ENCODE measurements at regions of chr4 and their contacts with region 1.

Region 1: DNA sequence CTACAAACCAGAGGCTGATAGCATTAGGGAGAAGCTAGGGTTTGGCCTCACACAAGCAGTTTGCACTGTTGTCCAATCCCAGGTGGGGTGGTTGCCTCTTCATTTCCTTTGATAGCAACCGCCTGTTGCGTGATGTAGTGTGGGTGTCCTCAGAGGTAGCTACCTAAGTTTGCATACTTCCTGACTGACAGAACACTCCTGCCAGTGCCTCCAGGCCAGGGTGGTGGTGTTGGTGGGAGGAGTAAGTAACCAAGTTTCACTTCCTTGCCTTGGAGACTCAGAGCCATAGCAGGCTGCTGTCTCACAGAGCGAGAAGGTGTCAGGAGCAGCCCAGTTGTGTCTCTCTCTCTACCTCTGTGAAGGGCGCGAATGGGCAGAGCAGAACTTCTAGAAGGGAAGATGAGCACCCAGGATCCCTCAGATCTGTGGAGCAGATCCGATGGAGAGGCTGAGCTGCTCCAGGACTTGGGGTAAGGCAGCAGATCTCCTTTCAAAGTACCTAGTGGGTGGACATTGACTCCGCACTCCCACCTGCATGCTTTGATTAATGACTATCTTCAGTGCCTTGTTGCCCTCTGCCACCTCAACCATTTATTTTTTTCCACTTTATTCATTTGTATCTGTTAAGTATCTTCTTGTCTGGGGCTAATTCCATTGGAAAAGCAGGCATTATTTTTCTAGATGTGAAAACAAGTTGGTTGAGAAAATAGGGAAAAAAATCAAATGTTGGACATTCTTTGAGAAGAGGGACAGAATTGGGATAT is at the start of gene DAPP1:
- DNase-seq: peak; percentile 39 to 88 (median 73)
- ATAC-seq: peak; percentile 96 to 97
- H3K4me3 Mint-ChIP-seq: peak within 1 kb of the TSS; percentile 85 to 95 (median 91)
- H3K27ac Mint-ChIP-seq: peak within 1 kb of the TSS; percentile 81 to 98 (median 96)
- H3K4me1 Mint-ChIP-seq: peaks cover 29 to 65% (median 62%) of the 10 kb centered on the region in 4 donors
- H3K27me3 Mint-ChIP-seq: no peaks in the 10 kb centered on the region
- polyA plus RNA-seq, gene DAPP1: 8.6 to 17.0 (median 12.2) TPM

Region 2: DNA sequence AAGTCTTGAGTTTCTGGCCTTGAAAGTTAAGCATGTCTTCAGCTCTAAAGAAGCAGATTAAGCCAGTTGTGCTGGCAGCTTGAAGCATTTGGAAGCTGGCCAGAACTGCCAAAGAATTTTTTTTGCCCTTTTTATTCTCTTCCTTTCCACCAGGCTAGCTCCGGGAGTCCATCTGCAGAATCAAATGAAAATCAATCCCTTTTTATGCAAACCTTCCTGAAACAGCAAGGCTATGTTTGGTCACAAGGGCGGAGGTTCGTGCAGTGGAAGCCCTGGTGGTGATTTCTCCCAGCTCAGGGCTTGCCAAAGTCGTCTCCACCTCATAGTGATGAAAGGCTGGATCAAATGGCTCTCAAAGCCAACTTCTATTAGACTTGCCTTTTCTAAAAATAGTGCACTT is 137.5 kb before region 1 on chr4:
- POLR2A ChIA-PET with region 1: no interaction called
- DNase-seq: no peak
- ATAC-seq: no peak
- H3K4me3 Mint-ChIP-seq: no peak overlapping the region
- H3K27ac Mint-ChIP-seq: no peak overlapping the region
- H3K4me1 Mint-ChIP-seq: no peaks in the 10 kb centered on the region
- H3K27me3 Mint-ChIP-seq: peaks cover 4 to 32% (median 14%) of the 10 kb centered on the region in 5 donors

Region 3: DNA sequence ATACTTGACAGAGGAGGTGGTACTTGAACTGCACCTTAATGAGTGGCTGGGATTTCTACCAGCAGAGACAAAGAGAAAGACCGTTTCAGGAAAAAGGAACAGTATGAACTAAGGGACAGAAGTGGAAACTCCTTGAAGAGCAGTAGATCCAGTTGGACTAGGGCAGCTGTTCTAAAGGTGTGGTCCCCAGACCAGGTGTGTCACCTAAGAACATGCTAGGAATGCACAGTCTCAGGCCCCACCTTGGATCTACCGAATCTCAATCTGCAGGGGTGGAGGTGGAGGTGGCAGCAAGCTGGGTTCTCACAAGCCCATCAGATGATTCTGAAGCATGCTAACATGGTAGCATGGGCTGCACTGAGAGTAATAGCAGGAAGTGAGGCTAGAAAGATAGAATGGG is 22.2 kb after region 1 on chr4:
- POLR2A ChIA-PET with region 1: no interaction called
- DNase-seq: no peak
- ATAC-seq: no peak
- H3K4me3 Mint-ChIP-seq: no peak overlapping the region
- H3K27ac Mint-ChIP-seq: peak overlapping the region in 2 of 10 donors; percentile 4 to 46
- H3K4me1 Mint-ChIP-seq: peaks cover 0 to 9% (median 5%) of the 10 kb centered on the region in 4 donors
- H3K27me3 Mint-ChIP-seq: no peaks in the 10 kb centered on the region

Region 4: GRCh38 chr4:99894161-99894997 is 77.7 kb after region 1 on chr4 and contains the start of gene LAMTOR3:
- POLR2A ChIA-PET with region 1: interaction called, 14 read pairs
- DNase-seq: peak; percentile 81 to 93 (median 88)
- ATAC-seq: peak; percentile 99
- H3K4me3 Mint-ChIP-seq: peak within 1 kb of the TSS; percentile 92 to 99 (median 98)
- H3K27ac Mint-ChIP-seq: peak within 1 kb of the TSS; percentile 96 to 99 (median 99)
- H3K4me1 Mint-ChIP-seq: peaks cover 17 to 53% (median 47%) of the 10 kb centered on the region in 4 donors
- H3K27me3 Mint-ChIP-seq: no peaks in the 10 kb centered on the region
- polyA plus RNA-seq, gene LAMTOR3: 29.0 to 35.6 (median 29.7) TPM

Measured in naive thymus-derived CD8-positive, alpha-beta T cell (primary cell).